Activated B cell treated with CpG ODN at 0.5 μM for 24 hours (primary cell): ENCODE measurements at regions of chr20 and their contacts with region 1.

Region 1: GRCh38 chr20:324177-325044 is 941 bp upstream of the SOX12 start:
- DNase-seq: peak; percentile 97
- ATAC-seq: peak; percentile 63
- H3K4me3 Mint-ChIP-seq: peak overlapping the region; percentile 89
- H3K27ac Mint-ChIP-seq: peak overlapping the region; percentile 90
- H3K4me1 Mint-ChIP-seq: peaks cover 29% of the 10 kb centered on the region
- H3K27me3 Mint-ChIP-seq: no peaks in the 10 kb centered on the region
- CTCF ChIP-seq: no peak

Region 2: GRCh38 chr20:137668-138490 is 186.5 kb before region 1 on chr20:
- CTCF ChIA-PET with region 1: no interaction called
- POLR2A ChIA-PET with region 1: no interaction called
- intact Hi-C with region 1: no loop called
- DNase-seq: no peak
- ATAC-seq: no peak
- H3K4me3 Mint-ChIP-seq: no peak overlapping the region
- H3K27ac Mint-ChIP-seq: no peak overlapping the region
- H3K4me1 Mint-ChIP-seq: no peaks in the 10 kb centered on the region
- H3K27me3 Mint-ChIP-seq: peaks cover 20% of the 10 kb centered on the region
- CTCF ChIP-seq: no peak

Region 3: DNA sequence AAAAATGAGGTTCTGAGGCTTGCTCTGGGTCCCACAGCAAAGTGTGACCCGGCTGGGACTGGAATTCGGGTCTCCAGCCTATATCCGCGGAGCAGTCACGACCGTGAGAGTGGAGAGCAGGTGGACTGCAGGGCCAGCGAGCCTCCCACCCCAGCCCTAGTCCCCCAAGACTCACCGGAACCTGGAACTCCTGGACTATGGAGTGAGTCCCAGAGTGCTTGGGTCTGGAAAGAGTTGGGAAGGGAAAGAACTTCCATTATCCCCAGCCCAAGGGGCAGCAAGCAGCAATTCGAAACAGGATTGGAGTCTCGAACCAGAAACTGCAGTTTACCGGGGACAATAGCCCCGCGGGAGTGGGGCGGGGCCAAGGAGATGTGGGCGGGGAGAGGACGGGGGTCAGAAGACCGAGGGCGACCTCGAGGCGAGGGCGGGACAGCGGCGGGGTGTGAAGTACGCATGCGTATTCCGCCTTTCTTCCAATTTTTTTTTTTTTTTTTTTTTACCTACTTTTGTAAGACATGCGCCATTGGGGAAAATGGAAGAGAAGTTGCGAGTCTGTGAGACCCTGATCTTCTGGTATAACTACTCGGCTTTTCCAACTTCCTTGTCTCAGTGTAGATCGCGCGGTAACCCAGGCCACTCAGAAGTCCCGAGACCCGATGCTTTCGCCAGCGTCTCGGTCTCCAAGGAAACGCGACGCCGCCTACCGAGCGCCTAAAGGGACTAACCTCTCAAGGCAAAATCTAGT is 34.2 kb before region 1 on chr20 and contains the start of gene C20orf96:
- CTCF ChIA-PET with region 1: no interaction called
- POLR2A ChIA-PET with region 1: interaction called, 7 read pairs
- intact Hi-C with region 1: loop called (anchors 1 kb)
- DNase-seq: peak; percentile 85
- ATAC-seq: peak; percentile 97
- H3K4me3 Mint-ChIP-seq: no peak within 1 kb of the TSS
- H3K27ac Mint-ChIP-seq: no peak within 1 kb of the TSS
- H3K4me1 Mint-ChIP-seq: peaks cover 6% of the 10 kb centered on the region
- H3K27me3 Mint-ChIP-seq: no peaks in the 10 kb centered on the region
- CTCF ChIP-seq: no peak
- total RNA-seq, gene C20orf96: 5.3 and 5.5 TPM in 2 replicates

Region 4: GRCh38 chr20:297098-297924 is 27.1 kb before region 1 on chr20 and contains the start of gene ZCCHC3:
- CTCF ChIA-PET with region 1: no interaction called
- POLR2A ChIA-PET with region 1: interaction called, 79 read pairs
- intact Hi-C with region 1: loop called (anchors 1 kb)
- DNase-seq: peak; percentile 82
- ATAC-seq: peak; percentile 88
- H3K4me3 Mint-ChIP-seq: peak within 1 kb of the TSS; percentile 98
- H3K27ac Mint-ChIP-seq: peak within 1 kb of the TSS; percentile 98
- H3K4me1 Mint-ChIP-seq: peaks cover 44% of the 10 kb centered on the region
- H3K27me3 Mint-ChIP-seq: no peaks in the 10 kb centered on the region
- CTCF ChIP-seq: no peak
- total RNA-seq, gene ZCCHC3: 25.9 and 28.1 TPM in 2 replicates

Region 5: GRCh38 chr20:309841-310644 is 14.4 kb before region 1 on chr20:
- CTCF ChIA-PET with region 1: interaction called, 3 read pairs
- POLR2A ChIA-PET with region 1: interaction called, 23 read pairs
- intact Hi-C with region 1: loop called (anchors 1 kb)
- DNase-seq: peak; percentile 77
- ATAC-seq: peak; percentile 100
- H3K4me3 Mint-ChIP-seq: peak overlapping the region; percentile 86
- H3K27ac Mint-ChIP-seq: peak overlapping the region; percentile 86
- H3K4me1 Mint-ChIP-seq: peaks cover 18% of the 10 kb centered on the region
- H3K27me3 Mint-ChIP-seq: no peaks in the 10 kb centered on the region
- CTCF ChIP-seq: no peak

Region 6: GRCh38 chr20:347640-348484 is 23.5 kb after region 1 on chr20:
- CTCF ChIA-PET with region 1: interaction called, 19 read pairs
- POLR2A ChIA-PET with region 1: interaction called, 27 read pairs
- intact Hi-C with region 1: loop called (anchors 1 kb)
- DNase-seq: peak; percentile 65
- ATAC-seq: peak; percentile 82
- H3K4me3 Mint-ChIP-seq: peak overlapping the region; percentile 88
- H3K27ac Mint-ChIP-seq: peak overlapping the region; percentile 68
- H3K4me1 Mint-ChIP-seq: peaks cover 13% of the 10 kb centered on the region
- H3K27me3 Mint-ChIP-seq: no peaks in the 10 kb centered on the region
- CTCF ChIP-seq: no peak

Region 7: GRCh38 chr20:431012-431904 is 106.8 kb after region 1 on chr20:
- CTCF ChIA-PET with region 1: no interaction called
- POLR2A ChIA-PET with region 1: no interaction called
- intact Hi-C with region 1: no loop called
- DNase-seq: no peak
- ATAC-seq: no peak
- H3K4me3 Mint-ChIP-seq: no peak overlapping the region
- H3K27ac Mint-ChIP-seq: peak overlapping the region; percentile 35
- H3K4me1 Mint-ChIP-seq: peaks cover 31% of the 10 kb centered on the region
- H3K27me3 Mint-ChIP-seq: no peaks in the 10 kb centered on the region
- CTCF ChIP-seq: no peak

Region 8: DNA sequence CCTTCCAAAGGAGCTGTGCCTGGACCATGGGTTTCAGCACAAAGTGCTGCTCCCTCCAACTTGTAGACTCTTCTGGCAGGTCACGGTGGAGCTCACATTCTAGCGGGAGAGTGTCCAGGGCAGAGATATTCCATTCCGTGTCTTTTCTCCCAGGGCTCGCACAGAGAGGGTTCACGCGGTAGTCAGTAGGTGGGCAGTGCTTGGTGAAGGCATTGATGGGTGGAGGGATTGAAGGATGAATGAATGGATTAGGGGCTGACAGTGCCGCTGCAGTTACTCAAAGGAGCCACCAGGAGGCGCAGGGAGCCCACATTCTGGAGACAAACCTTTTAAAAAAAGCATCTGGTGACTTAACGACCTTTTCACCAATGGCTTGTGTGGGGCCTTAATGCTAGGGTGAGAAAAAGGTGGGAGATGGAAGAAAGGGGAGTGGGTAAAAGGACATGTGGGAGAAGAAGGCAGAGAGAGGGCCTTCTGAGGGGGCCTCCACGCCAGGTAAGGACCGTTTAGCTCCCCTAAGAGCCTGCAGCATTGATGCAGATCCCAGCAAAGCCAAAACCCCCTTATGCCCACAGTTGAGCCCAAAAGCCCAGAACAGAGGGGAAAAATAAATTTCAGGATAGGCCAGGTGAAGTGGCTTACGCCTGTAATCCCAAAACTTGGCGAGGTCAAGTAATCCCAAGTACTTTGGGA is 491.6 kb after region 1 on chr20:
- CTCF ChIA-PET with region 1: no interaction called
- POLR2A ChIA-PET with region 1: no interaction called
- intact Hi-C with region 1: no loop called
- DNase-seq: peak; percentile 58
- ATAC-seq: peak; percentile 82
- H3K4me3 Mint-ChIP-seq: no peak overlapping the region
- H3K27ac Mint-ChIP-seq: no peak overlapping the region
- H3K4me1 Mint-ChIP-seq: no peaks in the 10 kb centered on the region
- H3K27me3 Mint-ChIP-seq: peaks cover 27% of the 10 kb centered on the region
- CTCF ChIP-seq: no peak